ENCODE measurements at regions of chr6 and their contacts with region 1.

Region 1: GRCh38 chr6:16670183-16670582 is 91.1 kb downstream of the ATXN1 start:
- DNase-seq: no peak
- ATAC-seq: no peak
- H3K4me3 ChIP-seq: no peak overlapping the region
- H3K4me3 Mint-ChIP-seq: peak overlapping the region; percentile 20
- H3K27ac ChIP-seq: peak overlapping the region in 1 of 2 experiments; percentile 47
- H3K27ac Mint-ChIP-seq: peak overlapping the region; percentile 53
- H3K4me1 ChIP-seq: peaks cover 9% of the 10 kb centered on the region
- H3K4me1 Mint-ChIP-seq: peaks cover 44% of the 10 kb centered on the region
- H3K27me3 ChIP-seq: no peaks in the 10 kb centered on the region
- H3K27me3 Mint-ChIP-seq: no peaks in the 10 kb centered on the region
- CTCF ChIP-seq: no peak

Region 2: GRCh38 chr6:16712931-16713484 is 42.8 kb after region 1 on chr6:
- CTCF ChIA-PET with region 1: no interaction called
- POLR2A ChIA-PET with region 1: no interaction called
- intact Hi-C with region 1: loop called (anchors 5 kb)
- DNase-seq: peak in 2 of 9 experiments; percentile 48 to 62
- ATAC-seq: peak; percentile 28
- H3K4me3 ChIP-seq: no peak overlapping the region
- H3K4me3 Mint-ChIP-seq: peak overlapping the region; percentile 66
- H3K27ac ChIP-seq: peak overlapping the region; percentile 1 to 80
- H3K27ac Mint-ChIP-seq: peak overlapping the region; percentile 86
- H3K4me1 ChIP-seq: peaks cover 5% of the 10 kb centered on the region
- H3K4me1 Mint-ChIP-seq: peaks cover 38% of the 10 kb centered on the region
- H3K27me3 ChIP-seq: no peaks in the 10 kb centered on the region
- H3K27me3 Mint-ChIP-seq: no peaks in the 10 kb centered on the region
- CTCF ChIP-seq: no peak

Measured in CD8-positive, alpha-beta T cell (primary cell).